Left ventricle myocardium inferior (tissue), 1 donor: ENCODE measurements at regions of chr1 and their contacts with region 1.

Region 1: DNA sequence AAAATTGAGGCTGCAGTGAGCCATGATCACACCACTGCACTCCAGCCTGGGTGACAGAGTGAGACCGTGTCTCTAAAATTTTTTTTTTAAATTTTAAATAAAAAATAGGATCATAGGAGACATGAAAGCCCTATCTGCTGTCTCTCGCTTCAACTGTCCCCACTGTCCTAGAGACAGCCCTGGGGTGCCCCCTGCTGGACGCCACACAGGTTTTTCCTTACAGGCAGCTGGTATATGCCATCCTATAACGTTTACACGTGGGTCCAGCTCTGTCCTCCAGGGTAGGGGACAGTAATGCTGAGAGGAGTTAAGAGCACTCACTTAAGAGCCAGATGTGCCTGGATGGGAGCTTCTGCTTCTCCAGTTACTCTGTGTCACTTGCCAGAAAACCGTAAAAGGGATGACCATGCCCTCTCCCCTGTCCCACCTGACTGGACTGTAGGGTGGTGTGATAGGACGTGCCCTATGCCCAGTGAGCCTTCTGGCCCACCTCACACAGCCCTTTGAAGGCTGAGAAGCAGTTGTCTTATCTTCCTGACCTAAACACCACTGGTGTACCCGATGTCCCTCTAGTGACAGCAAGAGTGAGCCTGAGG is 8.5 kb downstream of the FBXO2 start:
- DNase-seq: peak; percentile 80
- H3K4me3 ChIP-seq: no peak overlapping the region
- H3K27ac ChIP-seq: no peak overlapping the region
- H3K4me1 ChIP-seq: peaks cover 37% of the 10 kb centered on the region
- H3K27me3 ChIP-seq: peaks cover 72% of the 10 kb centered on the region
- CTCF ChIP-seq: peak; percentile 81

Region 2: GRCh38 chr1:11037740-11038182 is 608.0 kb before region 1 on chr1:
- intact Hi-C with region 1: loop called (anchors 10 kb)
- DNase-seq: peak; percentile 84
- H3K4me3 ChIP-seq: no peak overlapping the region
- H3K27ac ChIP-seq: no peak overlapping the region
- H3K4me1 ChIP-seq: peaks cover 9% of the 10 kb centered on the region
- H3K27me3 ChIP-seq: no peaks in the 10 kb centered on the region
- CTCF ChIP-seq: no peak

Region 3: DNA sequence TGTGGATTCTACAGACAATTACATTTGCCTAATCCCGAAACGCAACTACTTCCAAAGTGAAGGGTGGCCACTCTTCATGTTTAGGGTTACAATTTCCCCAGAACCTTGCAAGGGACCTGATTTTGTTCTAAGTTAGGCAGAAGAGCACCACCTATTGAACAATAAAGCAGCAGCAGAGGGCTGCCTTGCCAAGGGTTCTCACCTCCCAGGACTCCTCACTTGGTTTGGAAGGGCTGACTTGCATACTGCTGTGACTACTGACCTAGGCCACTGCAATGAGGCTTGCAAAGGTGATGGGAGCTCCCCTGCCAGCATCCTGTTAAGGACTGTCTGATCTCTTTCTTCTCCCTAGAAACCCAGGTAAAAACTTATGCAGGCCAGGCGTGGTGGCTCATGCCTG is 397.6 kb before region 1 on chr1:
- intact Hi-C with region 1: loop called (anchors 5 kb)
- DNase-seq: no peak
- H3K4me3 ChIP-seq: no peak overlapping the region
- H3K27ac ChIP-seq: no peak overlapping the region
- H3K4me1 ChIP-seq: no peaks in the 10 kb centered on the region
- H3K27me3 ChIP-seq: no peaks in the 10 kb centered on the region
- CTCF ChIP-seq: no peak

Region 4: DNA sequence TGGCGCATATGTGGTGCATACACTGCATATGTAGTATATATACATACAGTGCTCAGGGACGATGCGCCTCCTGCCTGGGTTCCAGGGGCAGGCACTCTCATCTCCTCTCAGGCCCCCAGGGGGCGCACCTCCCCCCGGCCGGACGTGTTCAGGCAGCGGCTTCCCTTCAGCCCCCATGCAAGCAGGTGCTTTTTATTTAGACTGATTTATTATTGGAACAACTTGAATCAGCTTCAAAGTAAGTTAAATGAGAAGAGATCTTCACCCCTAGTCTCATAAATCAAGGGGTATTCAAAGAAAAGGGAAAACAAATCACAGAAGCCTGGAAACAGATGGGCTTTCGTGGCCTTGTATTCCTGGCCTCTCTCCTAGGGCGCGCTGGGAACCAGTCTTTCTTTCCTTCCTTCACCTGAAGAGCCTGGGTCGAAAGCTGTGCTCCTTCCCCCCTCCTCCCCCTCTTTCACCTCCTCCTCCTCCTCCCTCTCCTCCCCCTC is 308.1 kb before region 1 on chr1:
- intact Hi-C with region 1: loop called (anchors 2 kb)
- DNase-seq: peak; percentile 43
- H3K4me3 ChIP-seq: no peak overlapping the region
- H3K27ac ChIP-seq: no peak overlapping the region
- H3K4me1 ChIP-seq: no peaks in the 10 kb centered on the region
- H3K27me3 ChIP-seq: peaks cover 97% of the 10 kb centered on the region
- CTCF ChIP-seq: peak; percentile 80

Region 5: GRCh38 chr1:11707621-11708276 is 62.0 kb after region 1 on chr1:
- intact Hi-C with region 1: no loop called
- DNase-seq: peak; percentile 78
- H3K4me3 ChIP-seq: no peak overlapping the region
- H3K27ac ChIP-seq: peak overlapping the region; percentile 83
- H3K4me1 ChIP-seq: peaks cover 18% of the 10 kb centered on the region
- H3K27me3 ChIP-seq: peaks cover 75% of the 10 kb centered on the region
- CTCF ChIP-seq: no peak

Region 6: DNA sequence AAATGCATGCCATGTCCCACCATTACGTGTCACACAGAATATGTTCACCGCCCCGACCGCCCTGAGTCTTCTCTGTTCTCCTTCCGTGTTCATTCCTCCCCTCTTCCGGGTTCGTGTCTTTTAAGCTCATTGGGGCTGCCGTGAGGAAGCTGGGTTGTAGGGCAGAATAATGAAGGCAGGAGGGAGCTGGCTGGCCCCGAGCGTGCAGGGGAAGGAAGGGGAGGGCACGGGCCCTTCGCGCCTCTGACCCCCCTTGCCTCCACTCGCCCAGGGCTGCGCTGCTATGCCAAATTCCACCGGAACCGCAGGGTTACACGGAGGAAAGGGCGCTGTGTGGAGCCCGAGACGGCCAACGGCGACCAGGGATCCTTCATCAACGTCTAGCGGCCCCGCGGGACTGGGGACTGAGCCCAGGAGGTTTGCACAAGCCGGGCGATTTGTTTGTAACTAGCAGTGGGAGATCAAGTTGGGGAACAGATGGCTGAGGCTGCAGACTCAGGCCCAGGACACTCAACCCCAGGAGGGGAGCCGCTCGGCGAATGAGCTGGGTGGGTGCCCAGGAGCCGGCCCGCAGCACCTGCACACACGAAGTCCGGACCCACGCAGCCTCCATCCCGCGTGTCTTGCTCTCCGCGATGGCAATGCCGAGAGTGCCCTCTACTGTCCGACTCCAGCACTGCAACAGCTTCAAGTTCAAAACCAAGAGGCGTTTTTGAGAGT is 73.7 kb after region 1 on chr1:
- intact Hi-C with region 1: loop called (anchors 10 kb)
- DNase-seq: peak; percentile 84
- H3K4me3 ChIP-seq: peak overlapping the region; percentile 54
- H3K27ac ChIP-seq: peak overlapping the region; percentile 12
- H3K4me1 ChIP-seq: peaks cover 10% of the 10 kb centered on the region
- H3K27me3 ChIP-seq: peaks cover 31% of the 10 kb centered on the region
- CTCF ChIP-seq: peak; percentile 98

Region 7: DNA sequence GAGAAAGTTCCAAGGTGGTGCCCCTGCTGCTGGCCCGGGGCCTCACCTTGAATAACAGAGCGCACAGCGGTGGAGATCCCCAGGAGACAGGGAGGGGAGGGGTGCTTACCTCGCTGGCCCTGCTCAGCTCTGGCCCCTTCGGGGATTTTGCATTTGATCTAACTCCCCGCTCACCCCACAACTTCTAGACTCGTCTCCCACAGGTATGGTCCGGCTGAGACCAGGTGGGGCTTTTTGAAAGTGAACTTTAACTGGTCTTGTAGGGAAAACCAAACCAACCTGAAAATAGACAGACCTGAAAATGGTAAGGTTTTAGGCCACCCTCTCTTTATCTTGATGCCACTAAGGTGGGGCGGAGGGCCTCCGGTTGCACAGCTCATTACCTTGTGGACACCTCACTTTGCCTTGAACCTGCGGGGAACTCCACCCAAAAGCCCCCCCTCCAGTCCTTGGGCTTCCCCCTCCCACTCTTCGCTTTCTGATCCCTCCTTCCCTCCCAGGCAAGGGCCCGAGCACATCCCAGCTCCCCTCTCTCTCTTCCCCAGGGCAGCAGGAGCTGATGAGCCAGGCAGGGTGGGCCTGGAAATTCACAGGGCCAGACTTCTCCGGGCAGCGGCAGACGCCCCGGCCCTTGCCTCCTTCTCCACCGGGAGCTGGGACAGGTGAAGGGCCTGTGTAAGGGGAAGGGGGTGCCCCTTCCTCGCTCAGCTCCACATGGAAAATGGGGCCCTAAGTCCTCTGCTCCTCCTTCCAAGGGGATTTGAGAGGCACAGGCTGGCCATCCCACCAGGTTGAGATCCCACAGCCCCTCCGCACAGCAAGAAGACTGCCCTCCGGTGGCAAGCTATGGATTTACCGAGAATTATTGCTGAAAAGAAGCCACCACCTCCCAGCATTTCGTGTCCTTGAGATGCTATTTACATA is 433.4 kb after region 1 on chr1:
- intact Hi-C with region 1: no loop called
- DNase-seq: no peak
- H3K4me3 ChIP-seq: no peak overlapping the region
- H3K27ac ChIP-seq: no peak overlapping the region
- H3K4me1 ChIP-seq: no peaks in the 10 kb centered on the region
- H3K27me3 ChIP-seq: peaks cover 43% of the 10 kb centered on the region
- CTCF ChIP-seq: peak; percentile 58